ENCODE measurements at regions of chr5 and their contacts with region 1.

Region 1: GRCh38 chr5:41408676-41409443 is 101.5 kb downstream of the PLCXD3 start:
- DNase-seq: peak in 1 of 2 experiments; percentile 4
- H3K4me3 ChIP-seq: no peak overlapping the region
- H3K4me3 Mint-ChIP-seq: no peak overlapping the region
- H3K27ac Mint-ChIP-seq: peak overlapping the region; percentile 33
- H3K4me1 ChIP-seq: peaks cover 56% of the 10 kb centered on the region
- H3K4me1 Mint-ChIP-seq: peaks cover 42% of the 10 kb centered on the region
- H3K27me3 ChIP-seq: no peaks in the 10 kb centered on the region
- H3K27me3 Mint-ChIP-seq: no peaks in the 10 kb centered on the region
- CTCF ChIP-seq: no peak

Region 2: GRCh38 chr5:41181691-41182564 is 226.9 kb before region 1 on chr5:
- CTCF ChIA-PET with region 1: no interaction called
- POLR2A ChIA-PET with region 1: no interaction called
- intact Hi-C with region 1: loop called (anchors 2 kb)
- DNase-seq: no peak
- H3K4me3 ChIP-seq: no peak overlapping the region
- H3K4me3 Mint-ChIP-seq: peak overlapping the region; percentile 13
- H3K27ac Mint-ChIP-seq: peak overlapping the region; percentile 20
- H3K4me1 ChIP-seq: peaks cover 25% of the 10 kb centered on the region
- H3K4me1 Mint-ChIP-seq: peaks cover 16% of the 10 kb centered on the region
- H3K27me3 ChIP-seq: no peaks in the 10 kb centered on the region
- H3K27me3 Mint-ChIP-seq: no peaks in the 10 kb centered on the region
- CTCF ChIP-seq: no peak

Region 3: GRCh38 chr5:41346609-41347008 is 62.3 kb before region 1 on chr5:
- CTCF ChIA-PET with region 1: no interaction called
- POLR2A ChIA-PET with region 1: no interaction called
- intact Hi-C with region 1: loop called (anchors 5 kb)
- DNase-seq: no peak
- H3K4me3 ChIP-seq: no peak overlapping the region
- H3K4me3 Mint-ChIP-seq: no peak overlapping the region
- H3K27ac Mint-ChIP-seq: no peak overlapping the region
- H3K4me1 ChIP-seq: peaks cover 9% of the 10 kb centered on the region; the same call in 1 of the 2 replicates
- H3K4me1 Mint-ChIP-seq: peaks cover 6% of the 10 kb centered on the region
- H3K27me3 ChIP-seq: no peaks in the 10 kb centered on the region
- H3K27me3 Mint-ChIP-seq: peaks cover 8% of the 10 kb centered on the region
- CTCF ChIP-seq: no peak

Region 4: GRCh38 chr5:41637869-41638268 is 229.0 kb after region 1 on chr5:
- CTCF ChIA-PET with region 1: no interaction called
- POLR2A ChIA-PET with region 1: no interaction called
- intact Hi-C with region 1: loop called (anchors 1 kb)
- DNase-seq: no peak
- H3K4me3 ChIP-seq: no peak overlapping the region
- H3K4me3 Mint-ChIP-seq: no peak overlapping the region
- H3K27ac Mint-ChIP-seq: peak overlapping the region; percentile 7
- H3K4me1 ChIP-seq: peaks cover 32% of the 10 kb centered on the region
- H3K4me1 Mint-ChIP-seq: peaks cover 13% of the 10 kb centered on the region
- H3K27me3 ChIP-seq: no peaks in the 10 kb centered on the region
- H3K27me3 Mint-ChIP-seq: no peaks in the 10 kb centered on the region
- CTCF ChIP-seq: peak in 1 of 2 experiments; percentile 15